Activated B cell treated with CpG ODN at 0.5 μM for 24 hours (primary cell): ENCODE measurements at regions of chr2 and their contacts with region 1.

Region 1: GRCh38 chr2:202643012-202643858 is 8.5 kb downstream of the FAM117B start:
- DNase-seq: no peak
- ATAC-seq: peak; percentile 58
- H3K4me3 Mint-ChIP-seq: peak overlapping the region; percentile 69
- H3K27ac Mint-ChIP-seq: no peak overlapping the region
- H3K4me1 Mint-ChIP-seq: peaks cover 68% of the 10 kb centered on the region
- H3K27me3 Mint-ChIP-seq: no peaks in the 10 kb centered on the region
- CTCF ChIP-seq: no peak

Region 2: GRCh38 chr2:202653890-202654289 is 10.7 kb after region 1 on chr2:
- CTCF ChIA-PET with region 1: no interaction called
- POLR2A ChIA-PET with region 1: interaction called, 15 read pairs
- intact Hi-C with region 1: loop called (anchors 1 kb)
- DNase-seq: no peak
- ATAC-seq: no peak
- H3K4me3 Mint-ChIP-seq: peak overlapping the region; percentile 56
- H3K27ac Mint-ChIP-seq: peak overlapping the region; percentile 82
- H3K4me1 Mint-ChIP-seq: peaks cover 88% of the 10 kb centered on the region
- H3K27me3 Mint-ChIP-seq: no peaks in the 10 kb centered on the region
- CTCF ChIP-seq: no peak

Region 3: GRCh38 chr2:202660796-202661195 is 17.6 kb after region 1 on chr2:
- CTCF ChIA-PET with region 1: interaction called, 3 read pairs
- POLR2A ChIA-PET with region 1: interaction called, 9 read pairs
- intact Hi-C with region 1: loop called (anchors 1 kb)
- DNase-seq: no peak
- ATAC-seq: no peak
- H3K4me3 Mint-ChIP-seq: no peak overlapping the region
- H3K27ac Mint-ChIP-seq: no peak overlapping the region
- H3K4me1 Mint-ChIP-seq: peaks cover 89% of the 10 kb centered on the region
- H3K27me3 Mint-ChIP-seq: no peaks in the 10 kb centered on the region
- CTCF ChIP-seq: no peak

Region 4: GRCh38 chr2:202716953-202717597 is 73.8 kb after region 1 on chr2:
- CTCF ChIA-PET with region 1: no interaction called
- POLR2A ChIA-PET with region 1: no interaction called
- intact Hi-C with region 1: no loop called
- DNase-seq: no peak
- ATAC-seq: no peak
- H3K4me3 Mint-ChIP-seq: no peak overlapping the region
- H3K27ac Mint-ChIP-seq: no peak overlapping the region
- H3K4me1 Mint-ChIP-seq: peaks cover 28% of the 10 kb centered on the region
- H3K27me3 Mint-ChIP-seq: no peaks in the 10 kb centered on the region
- CTCF ChIP-seq: no peak

Region 5: DNA sequence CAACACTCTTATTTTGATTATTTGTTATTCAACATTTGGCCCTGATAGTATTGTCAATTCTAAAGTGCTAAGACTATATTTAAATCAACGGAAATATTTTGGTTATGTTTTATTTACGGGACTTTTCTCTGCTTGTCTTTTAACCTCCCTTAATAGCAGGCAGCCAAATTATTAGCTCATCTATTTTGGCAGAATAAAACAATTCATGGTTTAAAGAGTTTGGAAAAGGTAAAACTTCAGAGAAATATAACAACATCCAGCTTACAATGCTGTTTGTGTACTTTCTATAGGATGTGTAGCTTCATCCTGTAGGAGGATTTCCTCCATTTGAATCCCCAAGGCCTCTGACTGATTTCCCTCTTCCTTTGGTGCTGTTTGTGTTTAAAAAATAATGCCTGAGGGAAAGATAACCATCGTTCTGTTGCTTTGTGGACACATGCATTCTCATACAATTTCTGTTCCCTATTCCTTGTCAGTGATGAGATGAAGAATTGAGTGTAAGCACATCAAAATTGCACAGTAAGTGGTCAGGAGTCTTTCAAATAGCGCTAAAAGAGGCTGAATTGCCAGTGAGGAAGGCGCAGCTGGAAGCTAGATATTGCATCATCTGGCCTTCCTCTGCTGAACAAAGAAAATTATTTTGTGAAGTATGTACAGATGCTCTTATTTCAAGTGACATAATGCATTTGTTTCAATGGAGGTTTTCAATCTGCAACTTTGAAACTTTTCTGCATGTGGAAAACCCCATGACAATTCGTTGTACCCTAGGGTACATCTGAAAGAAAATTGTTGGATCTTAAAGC is 1143.5 kb after region 1 on chr2:
- CTCF ChIA-PET with region 1: no interaction called
- POLR2A ChIA-PET with region 1: no interaction called
- intact Hi-C with region 1: no loop called
- DNase-seq: no peak
- ATAC-seq: no peak
- H3K4me3 Mint-ChIP-seq: no peak overlapping the region
- H3K27ac Mint-ChIP-seq: no peak overlapping the region
- H3K4me1 Mint-ChIP-seq: no peaks in the 10 kb centered on the region
- H3K27me3 Mint-ChIP-seq: peaks cover 31% of the 10 kb centered on the region
- CTCF ChIP-seq: no peak